Activated B cell treated with CpG ODN at 0.5 μM for 24 hours (primary cell): ENCODE measurements at regions of chr5 and their contacts with region 1.

Region 1: DNA sequence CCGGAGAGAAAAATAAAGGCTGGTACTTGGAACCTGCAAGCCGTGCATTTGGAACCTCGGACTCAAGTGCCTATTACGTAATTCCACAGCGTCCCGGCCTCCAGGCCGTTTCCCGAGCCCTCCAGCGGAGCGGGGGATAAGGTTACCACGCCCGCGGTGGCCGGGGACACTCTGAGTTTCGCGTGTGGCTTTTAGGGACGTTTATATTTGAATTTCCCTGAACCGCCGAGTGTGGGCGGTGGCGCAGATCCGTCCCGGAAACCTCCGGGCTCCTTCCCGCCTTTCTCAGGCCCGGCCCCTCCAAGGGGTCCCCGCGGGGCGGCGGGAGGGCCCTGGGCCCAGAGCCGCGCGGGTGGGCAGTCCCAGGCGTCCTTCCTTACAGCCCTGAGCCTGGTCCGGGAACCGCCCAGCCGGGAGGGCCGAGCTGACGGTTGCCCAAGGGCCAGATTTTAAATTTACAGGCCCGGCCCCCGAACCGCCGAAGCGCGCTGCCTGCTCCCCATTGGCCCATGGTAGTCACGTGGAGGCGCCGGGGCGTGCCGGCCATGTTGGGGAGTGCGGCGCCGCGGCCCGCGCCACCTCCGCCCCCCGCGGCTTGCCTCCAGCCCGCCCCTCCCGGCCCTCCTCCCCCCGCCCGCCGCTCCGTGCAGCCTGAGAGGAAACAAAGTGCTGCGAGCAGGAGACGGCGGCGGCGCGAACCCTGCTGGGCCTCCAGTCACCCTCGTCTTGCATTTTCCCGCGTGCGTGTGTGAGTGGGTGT is at the start of gene LMNB1:
- DNase-seq: peak; percentile 94
- ATAC-seq: peak; percentile 71
- H3K4me3 Mint-ChIP-seq: peak within 1 kb of the TSS; percentile 92
- H3K27ac Mint-ChIP-seq: peak within 1 kb of the TSS; percentile 96
- H3K4me1 Mint-ChIP-seq: peaks cover 36% of the 10 kb centered on the region
- H3K27me3 Mint-ChIP-seq: no peaks in the 10 kb centered on the region
- CTCF ChIP-seq: no peak
- total RNA-seq, gene LMNB1: 34.7 and 35.7 TPM in 2 replicates

Region 2: GRCh38 chr5:125700380-125700861 is 1076.3 kb before region 1 on chr5:
- CTCF ChIA-PET with region 1: no interaction called
- POLR2A ChIA-PET with region 1: no interaction called
- intact Hi-C with region 1: no loop called
- DNase-seq: no peak
- ATAC-seq: no peak
- H3K4me3 Mint-ChIP-seq: no peak overlapping the region
- H3K27ac Mint-ChIP-seq: no peak overlapping the region
- H3K4me1 Mint-ChIP-seq: no peaks in the 10 kb centered on the region
- H3K27me3 Mint-ChIP-seq: peaks cover 2% of the 10 kb centered on the region
- CTCF ChIP-seq: no peak

Region 3: GRCh38 chr5:125848746-125849145 is 927.9 kb before region 1 on chr5:
- CTCF ChIA-PET with region 1: no interaction called
- POLR2A ChIA-PET with region 1: no interaction called
- intact Hi-C with region 1: no loop called
- DNase-seq: no peak
- ATAC-seq: no peak
- H3K4me3 Mint-ChIP-seq: no peak overlapping the region
- H3K27ac Mint-ChIP-seq: no peak overlapping the region
- H3K4me1 Mint-ChIP-seq: no peaks in the 10 kb centered on the region
- H3K27me3 Mint-ChIP-seq: no peaks in the 10 kb centered on the region
- CTCF ChIP-seq: no peak

Region 4: DNA sequence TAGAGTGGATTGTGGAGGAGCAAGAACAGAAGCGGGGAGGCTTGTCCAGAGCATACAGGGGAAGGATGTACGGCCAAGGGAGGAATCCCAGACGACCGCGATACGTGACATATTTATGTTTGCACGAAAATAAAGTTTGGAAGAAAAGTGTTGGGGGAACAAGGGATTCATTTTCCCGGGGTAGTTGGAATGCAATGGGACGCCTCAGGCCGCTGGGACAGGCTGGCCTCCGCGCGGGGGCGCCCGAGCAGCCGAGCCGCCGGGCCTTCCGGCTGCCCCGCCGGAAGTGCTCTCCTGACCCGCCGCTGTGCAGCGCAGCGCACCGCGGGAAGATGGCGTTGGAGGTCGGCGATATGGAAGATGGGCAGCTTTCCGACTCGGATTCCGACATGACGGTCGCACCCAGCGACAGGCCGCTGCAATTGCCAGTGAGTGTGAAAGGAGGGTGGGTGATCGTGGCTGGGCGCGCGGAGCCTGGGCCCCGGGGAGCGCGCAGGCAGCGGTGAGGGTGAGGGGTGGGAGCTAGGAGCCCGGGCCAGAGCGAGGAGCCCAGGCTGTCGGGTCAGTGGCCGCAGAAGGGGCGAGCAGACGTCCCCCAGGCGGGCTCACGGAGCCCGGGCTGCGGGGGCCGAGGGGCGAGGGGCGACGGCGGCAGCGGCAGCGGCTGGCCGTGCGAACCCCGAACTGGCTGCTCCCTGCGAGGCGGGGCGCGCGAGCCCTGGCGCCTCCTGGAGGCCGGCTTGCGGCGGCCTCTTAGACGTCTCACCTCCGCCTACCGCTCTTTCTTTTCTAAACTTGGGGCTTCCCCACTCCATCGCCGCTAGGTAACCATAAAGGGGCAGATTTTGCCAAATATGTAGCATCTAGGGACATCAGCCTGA is 175.8 kb before region 1 on chr5 and contains the start of gene PHAX:
- CTCF ChIA-PET with region 1: no interaction called
- POLR2A ChIA-PET with region 1: interaction called, 14 read pairs
- intact Hi-C with region 1: loop called (anchors 1 kb)
- DNase-seq: peak; percentile 76
- ATAC-seq: peak; percentile 94
- H3K4me3 Mint-ChIP-seq: peak within 1 kb of the TSS; percentile 99
- H3K27ac Mint-ChIP-seq: peak within 1 kb of the TSS; percentile 95
- H3K4me1 Mint-ChIP-seq: peaks cover 36% of the 10 kb centered on the region
- H3K27me3 Mint-ChIP-seq: no peaks in the 10 kb centered on the region
- CTCF ChIP-seq: no peak
- total RNA-seq, gene PHAX: 31.0 and 33.3 TPM in 2 replicates

Region 5: GRCh38 chr5:126707080-126707479 is 69.6 kb before region 1 on chr5:
- CTCF ChIA-PET with region 1: no interaction called
- POLR2A ChIA-PET with region 1: no interaction called
- intact Hi-C with region 1: no loop called
- DNase-seq: no peak
- ATAC-seq: no peak
- H3K4me3 Mint-ChIP-seq: no peak overlapping the region
- H3K27ac Mint-ChIP-seq: no peak overlapping the region
- H3K4me1 Mint-ChIP-seq: no peaks in the 10 kb centered on the region
- H3K27me3 Mint-ChIP-seq: no peaks in the 10 kb centered on the region
- CTCF ChIP-seq: no peak

Region 6: GRCh38 chr5:126745259-126745992 is 31.3 kb before region 1 on chr5:
- CTCF ChIA-PET with region 1: interaction called, 18 read pairs
- POLR2A ChIA-PET with region 1: interaction called, 12 read pairs
- intact Hi-C with region 1: loop called (anchors 1 kb)
- DNase-seq: no peak
- ATAC-seq: no peak
- H3K4me3 Mint-ChIP-seq: no peak overlapping the region
- H3K27ac Mint-ChIP-seq: no peak overlapping the region
- H3K4me1 Mint-ChIP-seq: peaks cover 19% of the 10 kb centered on the region
- H3K27me3 Mint-ChIP-seq: peaks cover 4% of the 10 kb centered on the region
- CTCF ChIP-seq: no peak

Region 7: GRCh38 chr5:126794157-126794828 is 17.6 kb after region 1 on chr5:
- CTCF ChIA-PET with region 1: interaction called, 12 read pairs
- POLR2A ChIA-PET with region 1: interaction called, 15 read pairs
- intact Hi-C with region 1: no loop called
- DNase-seq: no peak
- ATAC-seq: no peak
- H3K4me3 Mint-ChIP-seq: no peak overlapping the region
- H3K27ac Mint-ChIP-seq: peak overlapping the region; percentile 35
- H3K4me1 Mint-ChIP-seq: peaks cover 30% of the 10 kb centered on the region
- H3K27me3 Mint-ChIP-seq: no peaks in the 10 kb centered on the region
- CTCF ChIP-seq: no peak

Region 8: GRCh38 chr5:126846344-126846743 is 69.7 kb after region 1 on chr5:
- CTCF ChIA-PET with region 1: no interaction called
- POLR2A ChIA-PET with region 1: interaction called, 11 read pairs
- intact Hi-C with region 1: no loop called
- DNase-seq: no peak
- ATAC-seq: no peak
- H3K4me3 Mint-ChIP-seq: no peak overlapping the region
- H3K27ac Mint-ChIP-seq: peak overlapping the region; percentile 95
- H3K4me1 Mint-ChIP-seq: peaks cover 41% of the 10 kb centered on the region
- H3K27me3 Mint-ChIP-seq: no peaks in the 10 kb centered on the region
- CTCF ChIP-seq: no peak

Region 9: GRCh38 chr5:127101291-127101932 is 324.7 kb after region 1 on chr5:
- CTCF ChIA-PET with region 1: no interaction called
- POLR2A ChIA-PET with region 1: no interaction called
- intact Hi-C with region 1: no loop called
- DNase-seq: no peak
- ATAC-seq: no peak
- H3K4me3 Mint-ChIP-seq: no peak overlapping the region
- H3K27ac Mint-ChIP-seq: no peak overlapping the region
- H3K4me1 Mint-ChIP-seq: no peaks in the 10 kb centered on the region
- H3K27me3 Mint-ChIP-seq: peaks cover 4% of the 10 kb centered on the region
- CTCF ChIP-seq: no peak

Region 10: GRCh38 chr5:127229185-127229889 is 452.7 kb after region 1 on chr5:
- CTCF ChIA-PET with region 1: no interaction called
- POLR2A ChIA-PET with region 1: interaction called, 16 read pairs
- intact Hi-C with region 1: no loop called
- DNase-seq: peak; percentile 62
- ATAC-seq: peak; percentile 86
- H3K4me3 Mint-ChIP-seq: peak overlapping the region; percentile 85
- H3K27ac Mint-ChIP-seq: no peak overlapping the region
- H3K4me1 Mint-ChIP-seq: peaks cover 18% of the 10 kb centered on the region
- H3K27me3 Mint-ChIP-seq: no peaks in the 10 kb centered on the region
- CTCF ChIP-seq: no peak